Dendritic cell treated with granulocyte-macrophage colony-stimulating factor and Interleukin-4, amounts not matched to agents 40 ng/mL and 50 ng/mL, for 4 days (primary cell): ENCODE measurements at regions of chr3 and their contacts with region 1.

Region 1: DNA sequence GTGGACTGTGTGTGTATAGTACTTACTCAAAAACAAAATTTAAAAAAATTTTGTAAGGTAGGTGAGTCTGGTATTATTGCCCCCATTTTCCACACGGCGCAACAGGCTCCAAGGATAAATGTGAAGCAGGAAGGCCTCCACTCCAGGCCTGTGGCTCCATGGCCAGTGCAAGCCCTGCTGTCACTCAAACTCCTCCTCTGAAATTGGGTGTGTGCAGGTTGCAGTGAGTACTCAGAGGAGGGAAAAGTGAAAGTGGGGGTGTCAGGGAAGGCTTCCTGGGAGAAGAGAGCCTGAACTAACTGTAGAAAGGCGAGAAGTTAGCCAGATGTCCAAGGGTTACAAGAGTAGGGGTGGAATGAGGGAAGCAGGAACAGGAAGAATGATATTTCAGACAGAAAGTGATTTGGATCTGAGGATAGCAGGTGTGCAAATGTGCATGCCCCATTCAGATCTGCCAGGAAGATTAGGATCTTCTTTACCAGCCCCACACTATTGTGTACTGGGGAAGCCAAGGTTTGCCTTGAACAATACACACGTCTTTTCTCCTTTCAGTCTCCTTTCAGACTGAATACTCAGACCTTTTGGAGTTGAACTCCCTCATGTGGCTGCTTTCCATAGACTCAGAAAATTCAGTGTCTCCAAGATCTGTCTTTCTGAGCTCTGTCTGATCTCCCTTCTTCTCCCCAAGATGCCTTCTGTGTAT is 48.7 kb upstream of the RYK start:
- H3K4me3 Mint-ChIP-seq: no peak overlapping the region
- H3K27ac Mint-ChIP-seq: no peak overlapping the region
- H3K4me1 Mint-ChIP-seq: peaks cover 6% of the 10 kb centered on the region
- H3K27me3 Mint-ChIP-seq: peaks cover 31% of the 10 kb centered on the region

Region 2: GRCh38 chr3:133949438-133949837 is 349.9 kb before region 1 on chr3:
- intact Hi-C with region 1: no loop called
- H3K4me3 Mint-ChIP-seq: no peak overlapping the region
- H3K27ac Mint-ChIP-seq: no peak overlapping the region
- H3K4me1 Mint-ChIP-seq: no peaks in the 10 kb centered on the region
- H3K27me3 Mint-ChIP-seq: no peaks in the 10 kb centered on the region

Region 3: GRCh38 chr3:134212906-134213665 is 86.2 kb before region 1 on chr3:
- intact Hi-C with region 1: loop called (anchors 5 kb)
- H3K4me3 Mint-ChIP-seq: no peak overlapping the region
- H3K27ac Mint-ChIP-seq: peak overlapping the region; percentile 16
- H3K4me1 Mint-ChIP-seq: peaks cover 19% of the 10 kb centered on the region
- H3K27me3 Mint-ChIP-seq: no peaks in the 10 kb centered on the region

Region 4: GRCh38 chr3:134239538-134239937 is 59.8 kb before region 1 on chr3:
- intact Hi-C with region 1: loop called (anchors 10 kb)
- H3K4me3 Mint-ChIP-seq: no peak overlapping the region
- H3K27ac Mint-ChIP-seq: no peak overlapping the region
- H3K4me1 Mint-ChIP-seq: peaks cover 67% of the 10 kb centered on the region
- H3K27me3 Mint-ChIP-seq: no peaks in the 10 kb centered on the region